Lower leg skin (tissue), 4 donors: ENCODE measurements at regions of chr6 and their contacts with region 1.

Region 1: DNA sequence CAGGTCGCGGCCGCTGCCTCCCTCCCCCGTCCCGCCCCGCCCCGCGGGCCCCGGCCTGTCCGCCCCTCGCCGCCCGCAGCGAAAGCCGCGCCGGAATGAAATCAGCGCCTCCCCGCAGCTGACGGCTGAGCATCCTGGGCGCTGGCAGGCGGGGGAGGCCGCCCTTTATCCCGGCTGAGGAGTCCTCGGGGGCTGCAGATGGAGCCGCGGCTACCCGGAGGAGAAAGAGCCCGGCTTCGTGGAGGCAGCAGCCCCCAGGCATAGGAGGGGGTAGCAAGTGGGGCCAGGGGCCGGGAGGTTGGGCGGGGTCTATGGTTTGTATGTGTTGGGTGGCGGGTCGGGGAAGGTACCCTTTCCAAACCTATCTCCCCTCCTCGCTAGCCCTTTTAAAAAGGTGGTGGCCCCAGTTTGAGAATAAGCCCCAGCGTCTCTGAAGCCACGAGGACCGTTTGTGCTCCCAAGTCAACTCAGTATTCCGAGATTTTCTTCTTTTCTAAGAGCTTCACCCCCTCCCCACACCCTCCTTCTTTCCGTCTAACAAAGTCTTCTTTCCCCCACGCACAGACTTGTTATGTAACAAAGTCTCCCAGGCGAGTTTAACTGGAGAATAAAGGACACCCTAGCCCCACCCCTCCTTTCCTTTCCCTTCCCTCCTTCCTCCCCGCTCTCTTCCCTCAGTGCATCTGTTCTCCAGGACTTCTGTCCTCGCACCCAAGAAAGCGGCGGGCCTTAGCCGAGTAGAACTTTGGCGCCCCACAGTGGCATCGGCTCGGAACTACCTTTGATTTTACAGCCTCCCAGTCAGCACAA is 11.0 kb downstream of the POU3F2 start:
- DNase-seq: peak; percentile 51 to 95
- H3K4me3 ChIP-seq: no peak overlapping the region
- CTCF ChIP-seq: no peak
- POLR2A ChIP-seq: no peak

Region 2: GRCh38 chr6:97497713-97498331 is 1347.6 kb before region 1 on chr6:
- intact Hi-C with region 1: loop called (anchors 10 kb)
- DNase-seq: peak; percentile 57 to 89
- H3K4me3 ChIP-seq: no peak overlapping the region
- CTCF ChIP-seq: no peak
- POLR2A ChIP-seq: no peak

Region 3: GRCh38 chr6:98957446-98957845 is 112.0 kb after region 1 on chr6:
- intact Hi-C with region 1: no loop called
- DNase-seq: peak in 1 of 2 donors; percentile 81
- H3K4me3 ChIP-seq: no peak overlapping the region
- CTCF ChIP-seq: no peak
- POLR2A ChIP-seq: no peak